ENCODE measurements at regions of chr19 and their contacts with region 1.

Region 1: GRCh38 chr19:34428549-34429285 is 536 bp downstream of the UBA2 start:
- DNase-seq: peak in 2 of 9 donors; percentile 20 to 34
- ATAC-seq: peak; percentile 55
- H3K4me3 ChIP-seq: peak overlapping the region; percentile 95
- H3K4me3 Mint-ChIP-seq: peak overlapping the region; percentile 94 to 99 (median 98)
- H3K27ac ChIP-seq: peak overlapping the region; percentile 96
- H3K27ac Mint-ChIP-seq: peak overlapping the region; percentile 84 to 97 (median 94)
- H3K4me1 ChIP-seq: peaks cover 12 to 13% of the 10 kb centered on the region in 2 donors
- H3K4me1 Mint-ChIP-seq: peaks cover 24 to 52% (median 43%) of the 10 kb centered on the region in 7 donors
- H3K27me3 ChIP-seq: no peaks in the 10 kb centered on the region
- H3K27me3 Mint-ChIP-seq: no peaks in the 10 kb centered on the region

Region 2: DNA sequence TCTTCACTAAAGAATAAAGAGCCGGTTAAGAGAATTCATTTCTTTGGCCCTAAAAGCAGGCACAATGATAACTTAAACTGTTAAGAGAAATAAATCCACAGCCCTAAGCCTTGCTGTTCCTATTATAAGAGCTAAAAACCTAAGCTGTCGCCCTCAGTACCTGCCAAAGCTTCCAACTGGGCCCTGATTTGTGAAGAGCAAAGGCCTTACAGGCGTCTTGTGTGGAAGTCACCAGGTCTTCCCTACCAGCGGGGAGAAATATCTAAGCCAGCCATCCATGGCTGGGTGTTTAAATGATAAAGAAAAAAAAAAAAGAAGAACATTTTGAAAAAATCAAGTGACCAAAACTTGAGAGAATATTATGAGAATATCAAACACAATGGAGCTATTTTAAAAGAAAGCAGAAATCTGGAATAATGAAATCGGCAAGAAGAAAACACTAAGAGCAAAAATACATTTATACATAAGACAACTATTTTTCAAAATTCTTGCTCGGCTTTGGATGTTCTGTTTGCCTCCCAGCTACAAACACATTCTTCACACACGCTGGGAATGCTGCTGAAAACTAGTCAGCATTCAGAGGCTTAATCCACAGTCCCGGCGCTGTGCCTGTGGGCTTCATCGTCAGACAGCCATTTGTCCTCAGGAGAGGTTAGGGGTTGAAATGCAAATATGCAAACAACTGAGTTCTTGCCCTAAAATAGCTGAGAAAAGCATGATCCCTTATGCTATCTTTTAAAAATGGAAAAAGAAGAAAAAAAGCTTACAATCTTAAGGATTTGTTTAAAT is 346.2 kb before region 1 on chr19:
- CTCF ChIA-PET with region 1: no interaction called
- POLR2A ChIA-PET with region 1: no interaction called
- intact Hi-C with region 1: no loop called
- DNase-seq: no peak
- ATAC-seq: no peak
- H3K4me3 ChIP-seq: no peak overlapping the region
- H3K4me3 Mint-ChIP-seq: no peak overlapping the region
- H3K27ac ChIP-seq: no peak overlapping the region
- H3K27ac Mint-ChIP-seq: no peak overlapping the region
- H3K4me1 ChIP-seq: no peaks in the 10 kb centered on the region
- H3K4me1 Mint-ChIP-seq: no peaks in the 10 kb centered on the region
- H3K27me3 ChIP-seq: no peaks in the 10 kb centered on the region
- H3K27me3 Mint-ChIP-seq: peaks cover 0 to 32% (median 10%) of the 10 kb centered on the region in 5 donors

Region 3: DNA sequence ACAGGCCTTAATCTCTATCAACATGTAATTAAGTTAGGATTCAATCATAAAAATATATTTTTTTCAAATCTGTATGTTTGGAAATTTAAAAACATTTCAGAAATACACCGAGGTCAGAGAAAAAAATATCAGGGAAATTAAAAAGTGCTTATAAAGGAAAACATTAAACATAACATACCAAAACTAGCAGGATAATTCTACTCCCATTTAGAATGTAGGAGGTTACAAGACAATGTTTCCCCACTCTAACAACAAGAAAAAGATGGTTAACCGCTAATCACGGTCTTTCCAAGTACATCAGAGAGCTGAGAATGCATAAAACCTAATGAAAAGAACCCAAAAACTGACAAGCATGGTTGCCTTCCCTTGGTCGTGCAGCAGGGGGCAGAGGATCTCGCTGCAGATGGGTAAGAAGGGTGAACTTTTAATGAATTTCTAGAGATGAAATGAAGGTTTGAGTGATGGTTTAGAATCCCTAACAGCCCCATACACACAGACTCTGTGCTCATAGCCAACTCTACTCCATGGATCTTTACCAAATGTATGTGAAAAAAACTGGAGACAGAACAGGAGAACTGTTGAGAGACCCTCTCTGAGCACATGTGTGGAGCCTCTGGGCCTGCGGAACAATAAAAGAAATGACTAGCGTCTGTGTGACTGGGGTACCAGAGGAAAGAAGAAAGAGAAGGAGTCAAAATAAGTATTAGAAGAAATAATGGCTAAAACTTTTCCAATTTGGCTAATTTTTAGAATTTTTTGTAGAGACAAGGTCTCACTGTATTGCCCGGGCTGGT is 307.7 kb before region 1 on chr19:
- CTCF ChIA-PET with region 1: no interaction called
- POLR2A ChIA-PET with region 1: no interaction called
- intact Hi-C with region 1: loop called in 1 of 2 experiments (anchors 5 kb)
- DNase-seq: peak in 8 of 9 donors; percentile 38 to 57 (median 50)
- ATAC-seq: peak; percentile 76
- H3K4me3 ChIP-seq: no peak overlapping the region
- H3K4me3 Mint-ChIP-seq: no peak overlapping the region
- H3K27ac ChIP-seq: no peak overlapping the region
- H3K27ac Mint-ChIP-seq: peak overlapping the region in 3 of 9 donors; percentile 8 to 39 (median 9)
- H3K4me1 ChIP-seq: peaks cover 0 to 11% of the 10 kb centered on the region in 2 donors
- H3K4me1 Mint-ChIP-seq: peaks cover 2 to 33% (median 26%) of the 10 kb centered on the region in 7 donors
- H3K27me3 ChIP-seq: no peaks in the 10 kb centered on the region
- H3K27me3 Mint-ChIP-seq: peaks cover 0 to 13% (median 0%) of the 10 kb centered on the region in 5 donors

Region 4: DNA sequence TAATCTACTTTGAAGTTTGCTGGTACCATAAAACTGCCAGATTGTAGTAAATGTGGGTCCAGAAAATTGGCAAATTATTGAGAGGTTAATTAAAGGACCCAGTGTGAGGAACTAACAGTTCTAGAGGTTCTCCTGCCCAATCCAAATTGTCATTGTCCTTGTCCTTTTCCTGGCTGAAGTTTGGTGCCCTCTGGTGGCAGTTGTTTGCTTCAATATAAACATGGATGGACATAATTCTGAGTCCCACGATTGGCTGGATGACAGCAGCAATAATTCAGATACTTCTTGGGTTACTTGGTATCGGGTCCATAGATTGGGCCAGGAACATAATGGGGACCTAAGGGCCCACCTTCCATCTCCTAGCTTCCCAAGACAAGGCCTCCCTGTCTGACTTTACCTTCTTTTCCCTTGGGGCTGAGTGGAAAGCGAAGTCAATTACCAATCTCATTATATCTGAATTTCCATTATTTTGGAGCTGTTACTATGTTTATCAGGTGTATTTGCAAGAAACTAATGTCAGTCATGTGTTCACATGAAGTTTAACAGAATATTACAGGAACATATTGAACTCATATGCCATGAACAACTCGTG is 208.1 kb before region 1 on chr19:
- CTCF ChIA-PET with region 1: no interaction called
- POLR2A ChIA-PET with region 1: no interaction called
- intact Hi-C with region 1: loop called in 1 of 2 experiments (anchors 2 kb)
- DNase-seq: peak; percentile 21 to 58 (median 47)
- ATAC-seq: no peak
- H3K4me3 ChIP-seq: no peak overlapping the region
- H3K4me3 Mint-ChIP-seq: peak overlapping the region in 4 of 10 donors; percentile 3 to 29 (median 10)
- H3K27ac ChIP-seq: no peak overlapping the region
- H3K27ac Mint-ChIP-seq: peak overlapping the region in 8 of 9 donors; percentile 31 to 89 (median 76)
- H3K4me1 ChIP-seq: peaks cover 19 to 24% of the 10 kb centered on the region in 2 donors
- H3K4me1 Mint-ChIP-seq: peaks cover 23 to 79% (median 58%) of the 10 kb centered on the region in 7 donors
- H3K27me3 ChIP-seq: no peaks in the 10 kb centered on the region
- H3K27me3 Mint-ChIP-seq: no peaks in the 10 kb centered on the region

Region 5: DNA sequence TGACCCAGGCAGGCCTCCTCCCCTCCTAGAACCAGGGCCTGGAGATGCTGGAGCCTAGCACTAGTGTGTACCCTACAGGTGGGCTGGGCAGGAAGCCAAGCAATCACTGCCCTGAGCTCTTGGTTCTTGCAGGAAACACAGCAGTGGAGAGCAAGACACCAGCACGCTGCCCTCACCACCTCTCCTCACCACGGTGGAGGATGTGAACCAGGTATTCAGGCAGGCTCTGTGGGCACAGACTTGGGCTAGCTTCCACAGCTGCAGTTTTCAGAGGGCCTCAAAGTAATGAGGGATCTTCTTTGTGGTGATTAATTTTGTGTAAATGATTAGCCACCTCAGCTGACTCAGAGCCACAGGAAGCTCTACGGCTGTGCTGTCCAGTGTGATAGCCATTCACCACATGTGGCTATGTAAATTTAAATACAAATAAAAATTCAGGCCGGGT is 77.3 kb before region 1 on chr19:
- CTCF ChIA-PET with region 1: no interaction called
- POLR2A ChIA-PET with region 1: interaction called, 8 read pairs
- intact Hi-C with region 1: loop called in 1 of 2 experiments (anchors 1 kb)
- DNase-seq: peak in 1 of 9 donors; percentile 16
- ATAC-seq: no peak
- H3K4me3 ChIP-seq: no peak overlapping the region
- H3K4me3 Mint-ChIP-seq: peak overlapping the region in 7 of 10 donors; percentile 12 to 75 (median 45)
- H3K27ac ChIP-seq: peak overlapping the region; percentile 43
- H3K27ac Mint-ChIP-seq: peak overlapping the region in 8 of 9 donors; percentile 76 to 91 (median 86)
- H3K4me1 ChIP-seq: peaks cover 18 to 25% of the 10 kb centered on the region in 2 donors
- H3K4me1 Mint-ChIP-seq: peaks cover 13 to 41% (median 26%) of the 10 kb centered on the region in 7 donors
- H3K27me3 ChIP-seq: no peaks in the 10 kb centered on the region
- H3K27me3 Mint-ChIP-seq: no peaks in the 10 kb centered on the region

Region 6: DNA sequence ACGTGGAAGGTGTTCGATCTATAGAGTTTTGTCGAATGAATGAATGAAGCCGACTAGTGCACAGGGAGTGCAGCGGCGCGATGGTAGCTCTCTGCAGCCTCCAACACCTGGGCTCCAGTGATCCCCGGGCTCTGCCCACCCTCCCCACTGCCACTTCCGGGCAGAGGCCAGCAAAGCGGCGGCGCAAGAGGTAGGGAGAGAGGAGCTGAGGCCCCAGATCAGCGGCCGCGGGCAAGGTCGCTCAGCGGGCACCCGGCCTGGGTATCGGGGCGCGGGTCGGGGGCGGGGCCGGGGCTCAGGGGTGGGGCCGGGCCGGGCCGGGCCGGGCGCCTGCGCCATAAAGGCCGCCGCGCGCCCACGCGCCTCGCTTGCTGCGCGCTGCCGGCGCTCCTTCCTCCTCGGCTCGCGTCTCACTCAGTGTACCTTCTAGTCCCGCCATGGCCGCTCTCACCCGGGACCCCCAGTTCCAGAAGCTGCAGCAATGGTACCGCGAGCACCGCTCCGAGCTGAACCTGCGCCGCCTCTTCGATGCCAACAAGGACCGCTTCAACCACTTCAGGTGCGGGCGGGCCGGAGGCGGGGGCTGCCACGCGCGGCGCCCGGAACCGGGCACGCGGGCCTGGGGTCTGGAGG is 63.8 kb before region 1 on chr19 and contains the start of gene GPI:
- CTCF ChIA-PET with region 1: no interaction called
- POLR2A ChIA-PET with region 1: interaction called, 10 read pairs
- intact Hi-C with region 1: no loop called
- DNase-seq: peak; percentile 53 to 82 (median 65)
- ATAC-seq: peak; percentile 94
- H3K4me3 ChIP-seq: peak within 1 kb of the TSS; percentile 90
- H3K4me3 Mint-ChIP-seq: peak within 1 kb of the TSS; percentile 92 to 100 (median 96)
- H3K27ac ChIP-seq: peak within 1 kb of the TSS; percentile 73
- H3K27ac Mint-ChIP-seq: peak within 1 kb of the TSS; percentile 75 to 97 (median 85)
- H3K4me1 ChIP-seq: peaks cover 11 to 24% of the 10 kb centered on the region in 2 donors
- H3K4me1 Mint-ChIP-seq: peaks cover 32 to 70% (median 41%) of the 10 kb centered on the region in 7 donors
- H3K27me3 ChIP-seq: no peaks in the 10 kb centered on the region
- H3K27me3 Mint-ChIP-seq: no peaks in the 10 kb centered on the region
- total RNA-seq, gene GPI: 96.5 to 750 (median 104) TPM

Region 7: DNA sequence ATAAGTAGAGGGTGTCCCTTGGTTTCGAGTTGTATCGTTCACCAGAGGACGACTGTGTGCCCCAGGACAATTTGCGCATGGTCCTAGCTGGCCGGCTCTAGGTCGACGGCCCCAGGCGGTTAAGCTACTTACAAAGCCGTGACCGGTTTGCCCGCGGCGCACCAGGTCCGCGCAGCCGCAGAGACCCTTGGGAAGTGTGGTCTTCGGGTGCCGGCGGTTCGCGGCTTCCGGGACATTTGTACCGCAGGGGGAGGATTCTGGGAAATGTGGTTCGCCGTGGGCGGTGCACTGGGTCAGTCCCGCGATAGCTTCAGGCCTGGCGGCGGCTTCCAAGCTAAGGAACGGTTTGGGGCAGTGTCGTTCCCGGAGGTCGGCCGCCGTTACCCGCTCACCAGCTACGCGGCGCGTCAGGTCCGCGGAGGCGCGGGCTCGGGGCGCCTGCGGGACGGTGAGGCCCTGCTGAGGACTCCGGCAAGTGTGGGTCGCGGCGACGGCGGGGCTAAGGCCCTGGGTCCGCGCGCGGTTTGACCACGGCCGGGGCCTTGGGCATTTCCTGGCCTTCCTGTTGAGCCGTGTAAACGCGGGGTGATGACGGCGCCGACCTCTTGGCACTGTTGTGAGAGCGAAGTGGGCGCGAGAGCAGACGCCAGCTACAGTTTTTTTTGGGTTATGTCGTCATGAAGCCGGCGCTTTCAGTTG is 248.8 kb after region 1 on chr19 and contains the start of gene ZNF302:
- CTCF ChIA-PET with region 1: no interaction called
- POLR2A ChIA-PET with region 1: no interaction called
- intact Hi-C with region 1: loop called in 1 of 2 experiments (anchors 1 kb)
- DNase-seq: peak; percentile 87 to 96 (median 94)
- ATAC-seq: peak; percentile 95
- H3K4me3 ChIP-seq: peak within 1 kb of the TSS; percentile 93
- H3K4me3 Mint-ChIP-seq: peak within 1 kb of the TSS; percentile 92 to 99 (median 96)
- H3K27ac ChIP-seq: peak within 1 kb of the TSS; percentile 80
- H3K27ac Mint-ChIP-seq: peak within 1 kb of the TSS; percentile 94 to 100 (median 99)
- H3K4me1 ChIP-seq: peaks cover 14 to 15% of the 10 kb centered on the region in 2 donors
- H3K4me1 Mint-ChIP-seq: peaks cover 20 to 56% (median 35%) of the 10 kb centered on the region in 7 donors
- H3K27me3 ChIP-seq: no peaks in the 10 kb centered on the region
- H3K27me3 Mint-ChIP-seq: peaks cover 9 to 18% (median 12%) of the 10 kb centered on the region in 5 donors
- total RNA-seq, gene ZNF302: 13.6 to 61.4 (median 25.7) TPM